GM12878 (cell line): ENCODE measurements at regions of chr1 and their contacts with region 1.

Region 1: DNA sequence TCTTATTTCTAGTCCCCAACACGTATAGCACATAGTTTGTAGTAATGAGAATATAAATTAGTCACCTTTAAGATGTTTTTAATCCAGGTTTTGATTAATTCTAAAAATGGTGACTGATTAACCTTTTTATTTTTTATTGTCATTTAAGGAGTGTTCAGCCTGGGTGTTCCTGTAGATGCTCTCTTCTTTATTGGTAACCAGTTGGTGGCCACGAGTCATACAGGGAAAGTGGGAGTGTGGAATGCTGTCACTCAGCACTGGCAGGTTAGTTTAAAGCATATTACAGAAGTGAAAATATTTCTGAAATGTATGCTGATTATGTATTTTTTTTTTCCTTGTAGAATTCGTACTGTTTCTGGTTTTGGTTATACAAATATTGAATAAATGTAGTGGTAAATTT is 28.1 kb downstream of the KCTD3 start:
- DNase-seq: no peak
- ATAC-seq: no peak
- H3K4me3 ChIP-seq: no peak overlapping the region
- H3K27ac ChIP-seq: no peak overlapping the region
- H3K4me1 ChIP-seq: peaks cover 5% of the 10 kb centered on the region; the same call in 1 of the 2 replicates
- H3K27me3 ChIP-seq: no peaks in the 10 kb centered on the region
- CTCF ChIP-seq: no peak
- EP300 ChIP-seq: no peak
- POLR2A ChIP-seq: no peak
- RAD21 ChIP-seq: no peak

Region 2: GRCh38 chr1:215526553-215527151 is 68.6 kb before region 1 on chr1:
- CTCF ChIA-PET with region 1: no interaction called
- POLR2A ChIA-PET with region 1: no interaction called
- RAD21 ChIA-PET with region 1: no interaction called
- SMC1A ChIA-PET with region 1: no interaction called
- in situ Hi-C with region 1: no loop called
- intact Hi-C with region 1: no loop called
- DNase-seq: peak; percentile 16
- ATAC-seq: peak; percentile 70
- H3K4me3 ChIP-seq: no peak overlapping the region
- H3K27ac ChIP-seq: no peak overlapping the region
- H3K4me1 ChIP-seq: peaks cover 4% of the 10 kb centered on the region; the same call in 1 of the 2 replicates
- H3K27me3 ChIP-seq: no peaks in the 10 kb centered on the region
- CTCF ChIP-seq: peak; percentile 44 to 69 (median 58); a peak in 5 of 6 replicates
- EP300 ChIP-seq: no peak
- POLR2A ChIP-seq: no peak
- RAD21 ChIP-seq: peak; percentile 74

Region 3: DNA sequence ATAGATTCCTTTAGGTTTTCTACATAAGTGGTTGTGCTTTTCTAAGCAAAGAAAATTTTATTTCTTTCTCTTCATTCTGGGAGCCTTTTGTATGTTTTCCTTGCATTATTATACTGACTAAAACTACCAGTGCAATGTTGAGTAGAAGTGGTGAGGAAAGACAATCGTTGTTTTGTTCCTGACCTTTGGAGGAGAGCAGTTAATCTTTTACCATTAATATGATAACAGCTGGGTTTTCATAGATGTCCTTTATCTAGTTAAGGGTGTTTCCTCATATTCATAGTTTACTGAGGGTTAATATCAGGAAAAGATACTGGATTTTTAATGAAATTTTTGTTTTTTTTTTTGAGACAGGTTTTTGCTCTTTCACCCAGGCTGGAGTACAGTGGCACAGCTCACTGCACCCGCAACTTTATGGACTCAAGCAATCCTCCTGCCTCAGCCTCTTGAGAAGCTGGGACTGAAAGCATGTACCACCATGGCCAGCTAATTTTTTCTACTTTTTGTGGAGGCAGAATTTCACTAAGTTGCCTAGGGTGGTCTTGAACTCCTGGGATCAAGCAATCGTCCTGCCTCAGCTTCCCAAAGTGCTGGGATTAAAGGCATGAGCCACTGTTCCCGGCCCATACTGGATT is 37.1 kb before region 1 on chr1:
- CTCF ChIA-PET with region 1: no interaction called
- POLR2A ChIA-PET with region 1: no interaction called
- RAD21 ChIA-PET with region 1: no interaction called
- SMC1A ChIA-PET with region 1: no interaction called
- in situ Hi-C with region 1: no loop called
- intact Hi-C with region 1: no loop called
- DNase-seq: no peak
- ATAC-seq: no peak
- H3K4me3 ChIP-seq: no peak overlapping the region
- H3K27ac ChIP-seq: no peak overlapping the region
- H3K4me1 ChIP-seq: no peaks in the 10 kb centered on the region
- H3K27me3 ChIP-seq: no peaks in the 10 kb centered on the region
- CTCF ChIP-seq: no peak
- EP300 ChIP-seq: no peak
- POLR2A ChIP-seq: no peak
- RAD21 ChIP-seq: no peak

Region 4: DNA sequence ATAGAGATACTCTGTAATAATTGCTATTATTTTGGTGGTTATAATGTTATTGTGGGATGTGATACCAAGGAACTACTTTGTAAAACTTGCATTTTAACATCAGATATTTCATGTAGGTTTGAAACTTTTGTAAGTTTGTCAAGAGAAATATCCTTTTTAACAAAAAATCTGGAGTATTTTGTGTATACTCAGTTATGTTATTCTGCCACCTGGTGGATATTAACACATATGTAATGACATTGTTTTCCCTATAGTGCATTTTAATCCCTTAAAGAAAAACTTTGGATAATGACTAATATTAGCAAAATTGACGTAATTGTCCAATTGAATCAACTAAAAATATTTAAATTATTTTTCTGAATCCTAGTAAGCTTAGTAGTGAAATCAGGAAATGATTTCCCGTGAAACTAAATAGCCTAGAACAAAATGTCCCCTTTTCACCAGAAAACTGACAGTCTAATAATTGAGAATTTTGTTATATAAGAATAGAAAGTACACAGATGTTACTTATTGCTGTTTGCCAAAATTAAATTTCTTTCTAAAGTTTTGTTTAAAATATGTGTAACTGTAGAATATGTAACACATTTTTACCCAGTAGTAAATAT is 11.5 kb after region 1 on chr1:
- CTCF ChIA-PET with region 1: interaction called, 10 read pairs
- POLR2A ChIA-PET with region 1: interaction called, 4 read pairs
- RAD21 ChIA-PET with region 1: interaction called, 4 read pairs
- SMC1A ChIA-PET with region 1: interaction called, 13 read pairs
- in situ Hi-C with region 1: no loop called
- intact Hi-C with region 1: no loop called
- DNase-seq: no peak
- ATAC-seq: peak; percentile 62
- H3K4me3 ChIP-seq: no peak overlapping the region
- H3K27ac ChIP-seq: no peak overlapping the region
- H3K4me1 ChIP-seq: no peaks in the 10 kb centered on the region
- H3K27me3 ChIP-seq: no peaks in the 10 kb centered on the region
- CTCF ChIP-seq: peak in 2 of 3 experiments; percentile 9 to 36; a peak in 3 of 6 replicates
- EP300 ChIP-seq: no peak
- POLR2A ChIP-seq: no peak
- RAD21 ChIP-seq: peak; percentile 40